ENCODE measurements at regions of chr7 and their contacts with region 1.

Region 1: DNA sequence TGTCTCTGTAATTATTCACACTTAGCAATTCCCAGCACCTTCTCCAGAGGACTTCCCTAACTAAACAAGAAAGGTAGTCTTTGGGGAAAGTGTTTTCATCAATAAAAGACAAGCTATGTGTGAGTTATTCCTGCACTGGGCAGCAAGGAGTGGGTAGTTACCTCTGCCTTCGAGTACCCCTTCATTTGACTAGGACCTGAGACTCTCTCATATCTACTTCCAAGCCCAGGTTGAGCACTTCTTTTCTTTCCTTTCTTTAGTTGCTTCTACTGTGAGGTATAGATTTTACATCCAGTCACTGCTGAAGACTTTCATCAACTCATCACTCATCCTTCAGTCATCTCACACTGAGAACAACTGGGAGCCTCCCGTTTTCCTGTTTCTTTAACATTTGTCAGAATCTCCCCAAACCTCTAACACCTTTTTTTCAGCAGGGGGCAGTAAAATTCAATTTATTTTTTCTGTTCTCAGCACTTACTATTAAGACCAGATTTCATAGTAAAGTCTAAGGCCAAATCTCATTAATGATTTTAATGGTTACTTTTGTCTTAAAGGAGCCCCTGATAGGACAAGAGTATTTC is 80.1 kb upstream of the PRSS1 start:
- DNase-seq: no peak
- H3K4me3 Mint-ChIP-seq: no peak overlapping the region
- H3K27ac Mint-ChIP-seq: no peak overlapping the region
- H3K4me1 Mint-ChIP-seq: peaks cover 26% of the 10 kb centered on the region
- H3K27me3 Mint-ChIP-seq: no peaks in the 10 kb centered on the region

Region 2: DNA sequence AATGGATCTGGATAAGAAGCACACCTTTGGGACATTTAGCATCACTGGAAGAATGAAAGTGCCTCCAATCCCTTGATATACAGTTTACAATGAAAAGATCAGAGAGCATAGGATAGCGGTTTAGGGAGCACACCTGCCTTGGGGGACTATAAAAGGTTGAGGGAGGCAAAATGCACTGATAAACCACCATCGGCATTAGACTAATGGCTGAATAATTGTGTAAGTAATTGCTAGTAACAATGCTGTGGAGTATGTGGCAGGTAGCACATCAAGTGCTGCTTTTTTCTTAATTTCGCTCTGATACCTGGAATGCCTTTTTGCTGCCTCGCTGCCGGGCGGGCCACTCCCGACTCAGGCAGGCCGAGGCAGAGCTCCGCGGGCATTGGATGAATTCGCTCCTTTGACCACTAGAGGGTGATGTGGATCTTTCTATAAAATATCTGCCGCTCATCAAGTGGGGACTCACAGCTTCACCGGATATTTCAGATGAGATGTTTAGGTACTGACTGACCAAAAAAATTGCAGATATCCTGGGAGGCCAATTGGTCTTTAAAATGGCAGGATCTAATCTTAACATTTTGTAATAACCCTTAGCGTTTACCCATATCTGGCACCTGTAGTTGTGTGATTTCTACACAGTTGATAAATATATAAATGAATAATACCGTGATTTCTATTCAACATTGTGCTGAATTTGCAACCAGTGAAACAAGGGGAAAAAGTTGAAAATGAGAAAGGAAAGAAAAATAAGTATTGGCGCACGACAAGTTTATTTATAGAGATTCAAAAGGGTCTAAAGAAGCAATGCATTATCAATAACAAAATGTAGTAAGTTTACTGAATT is 36.7 kb before region 1 on chr7:
- intact Hi-C with region 1: loop called (anchors 5 kb)
- DNase-seq: peak; percentile 33
- H3K4me3 Mint-ChIP-seq: no peak overlapping the region
- H3K27ac Mint-ChIP-seq: no peak overlapping the region
- H3K4me1 Mint-ChIP-seq: peaks cover 11% of the 10 kb centered on the region
- H3K27me3 Mint-ChIP-seq: peaks cover 16% of the 10 kb centered on the region

Measured in activated T-helper 2 cell treated with anti-CD3 and anti-CD28 coated beads, Interferon-gamma antibody, Interleukin-2, Interleukin-4, amounts not matched to agents 10 μg/mL and 5 μg/mL and 100 μg/mL, durations not matched to agents 14 hours and 24 hours and 36 hours (primary cell).